ENCODE measurements at regions of chr19 and their contacts with region 1.

Region 1: DNA sequence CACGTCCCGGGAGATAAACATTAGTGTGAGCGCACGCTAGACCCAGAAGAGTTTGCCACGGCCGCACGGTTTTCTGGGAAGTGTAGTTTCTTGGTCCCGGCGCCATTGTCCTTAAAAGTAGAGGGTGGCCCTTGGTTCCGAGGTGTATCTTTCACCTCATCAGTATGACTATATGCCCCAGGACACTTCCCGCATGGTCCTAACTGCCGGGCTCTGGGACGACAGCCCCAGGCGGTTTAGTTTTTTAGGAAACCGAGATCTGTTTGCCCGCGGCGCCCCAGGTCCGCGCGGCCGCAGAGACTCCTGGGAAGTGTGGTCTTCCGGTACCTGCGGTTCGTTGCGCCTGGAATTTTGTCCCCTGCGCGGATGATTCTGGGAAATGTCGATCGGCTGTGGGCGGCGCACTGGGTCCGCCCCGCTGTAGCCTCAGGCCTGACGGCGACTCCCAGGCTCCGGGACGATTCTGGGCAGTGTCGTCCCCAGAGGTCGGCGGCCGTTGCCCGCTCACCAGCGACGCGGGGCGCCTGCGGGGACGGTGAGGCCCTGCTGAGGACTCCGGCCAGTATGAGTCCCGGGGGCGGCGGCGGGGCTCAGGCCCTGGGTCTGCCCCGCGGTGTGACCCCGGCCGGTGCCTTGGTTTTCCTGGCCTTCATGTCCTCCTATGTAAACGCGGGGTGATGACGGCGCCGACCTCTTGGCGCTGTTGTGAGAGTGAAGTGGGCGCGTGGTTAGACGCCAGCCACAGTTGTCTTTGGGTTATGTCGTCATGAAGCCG is at the start of gene ZNF181:
- DNase-seq: peak; percentile 90
- ATAC-seq: peak; percentile 89
- H3K4me3 Mint-ChIP-seq: peak within 1 kb of the TSS; percentile 96
- H3K27ac Mint-ChIP-seq: peak within 1 kb of the TSS; percentile 96
- H3K4me1 Mint-ChIP-seq: peaks cover 22% of the 10 kb centered on the region
- H3K27me3 Mint-ChIP-seq: no peaks in the 10 kb centered on the region
- total RNA-seq, gene ZNF181: 4.5 TPM

Region 2: GRCh38 chr19:34134190-34135053 is 599.6 kb before region 1 on chr19:
- CTCF ChIA-PET with region 1: no interaction called
- POLR2A ChIA-PET with region 1: no interaction called
- intact Hi-C with region 1: loop called in 1 of 2 experiments (anchors 1 kb)
- DNase-seq: peak; percentile 94
- ATAC-seq: peak; percentile 94
- H3K4me3 Mint-ChIP-seq: peak overlapping the region; percentile 92
- H3K27ac Mint-ChIP-seq: peak overlapping the region; percentile 95
- H3K4me1 Mint-ChIP-seq: peaks cover 9% of the 10 kb centered on the region
- H3K27me3 Mint-ChIP-seq: no peaks in the 10 kb centered on the region

Region 3: GRCh38 chr19:34359140-34359953 is 374.7 kb before region 1 on chr19:
- CTCF ChIA-PET with region 1: no interaction called
- POLR2A ChIA-PET with region 1: no interaction called
- intact Hi-C with region 1: loop called in 1 of 2 experiments (anchors 1 kb)
- DNase-seq: peak; percentile 100
- ATAC-seq: peak; percentile 93
- H3K4me3 Mint-ChIP-seq: peak overlapping the region; percentile 77
- H3K27ac Mint-ChIP-seq: peak overlapping the region; percentile 89
- H3K4me1 Mint-ChIP-seq: peaks cover 43% of the 10 kb centered on the region
- H3K27me3 Mint-ChIP-seq: no peaks in the 10 kb centered on the region

Region 4: DNA sequence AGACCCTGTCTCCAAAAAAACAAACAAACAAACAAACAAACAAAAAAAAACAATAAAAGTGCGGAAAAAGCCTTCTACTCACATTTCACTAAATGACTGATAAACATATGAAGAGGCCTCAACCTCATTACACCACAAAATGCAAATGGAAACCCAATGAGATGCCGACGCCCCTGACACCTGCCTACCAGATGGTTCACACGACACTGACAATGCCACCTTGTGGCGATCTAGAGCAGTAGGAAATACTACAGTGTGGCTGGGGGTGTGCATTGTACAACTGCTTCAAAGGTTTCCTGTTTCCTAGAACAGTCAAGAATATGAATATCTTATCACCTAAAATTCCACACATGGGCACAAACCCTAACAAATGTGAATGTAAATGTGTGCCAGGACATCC is 71.1 kb before region 1 on chr19:
- CTCF ChIA-PET with region 1: no interaction called
- POLR2A ChIA-PET with region 1: no interaction called
- intact Hi-C with region 1: no loop called
- DNase-seq: peak; percentile 71
- ATAC-seq: peak; percentile 99
- H3K4me3 Mint-ChIP-seq: no peak overlapping the region
- H3K27ac Mint-ChIP-seq: peak overlapping the region; percentile 21
- H3K4me1 Mint-ChIP-seq: peaks cover 22% of the 10 kb centered on the region
- H3K27me3 Mint-ChIP-seq: peaks cover 3% of the 10 kb centered on the region

Region 5: GRCh38 chr19:34677386-34678084 is 56.5 kb before region 1 on chr19 and contains the start of gene ZNF302:
- CTCF ChIA-PET with region 1: interaction called, 6 read pairs
- POLR2A ChIA-PET with region 1: interaction called, 11 read pairs
- intact Hi-C with region 1: loop called (anchors 1 kb)
- DNase-seq: peak; percentile 97
- ATAC-seq: peak; percentile 86
- H3K4me3 Mint-ChIP-seq: peak within 1 kb of the TSS; percentile 81
- H3K27ac Mint-ChIP-seq: peak within 1 kb of the TSS; percentile 99
- H3K4me1 Mint-ChIP-seq: peaks cover 23% of the 10 kb centered on the region
- H3K27me3 Mint-ChIP-seq: no peaks in the 10 kb centered on the region
- total RNA-seq, gene ZNF302: 17.1 to 17.6 TPM

Region 6: DNA sequence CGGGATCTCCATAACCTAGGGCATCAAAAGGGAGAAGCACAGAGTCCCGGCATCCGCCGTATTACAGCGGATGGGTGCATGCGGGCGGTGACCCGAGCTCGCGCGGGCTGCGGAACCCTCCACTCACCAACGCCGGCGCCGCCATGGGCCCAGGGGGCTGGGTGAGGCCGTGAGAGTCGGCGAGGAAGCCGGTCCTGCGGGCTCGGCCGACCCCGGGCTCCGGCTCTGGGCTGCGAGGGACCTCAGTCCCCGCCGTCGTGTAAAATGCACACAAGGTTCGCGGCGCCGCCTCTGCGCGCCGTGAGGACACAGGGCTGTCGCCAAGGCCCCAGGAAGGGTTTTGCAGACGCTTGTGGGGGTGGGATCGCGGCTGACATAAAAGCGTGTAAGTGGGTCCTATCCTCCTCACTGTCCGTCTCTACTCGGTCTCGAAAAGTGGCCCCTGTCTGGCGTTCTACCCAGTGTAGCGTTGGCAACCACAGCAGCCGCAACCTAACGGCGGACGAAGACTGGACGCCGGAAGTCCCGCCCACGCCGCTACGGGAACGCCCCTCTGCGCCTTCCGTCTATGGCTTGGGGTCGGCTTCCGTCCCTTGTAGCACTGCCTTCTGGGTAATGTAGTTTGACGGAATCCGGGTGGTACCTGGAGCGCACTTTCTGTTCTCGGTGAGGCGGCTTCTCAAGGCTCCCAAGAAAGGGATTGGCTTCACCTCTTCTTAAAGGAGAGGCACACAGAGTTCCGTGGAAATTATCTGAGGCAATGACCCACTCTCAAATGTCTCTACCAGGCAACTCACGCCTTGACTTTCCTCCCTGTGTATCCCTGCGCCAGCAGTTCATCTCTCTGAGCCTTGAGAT is 38.9 kb after region 1 on chr19 and contains the start of gene ZNF599:
- CTCF ChIA-PET with region 1: interaction called, 3 read pairs
- POLR2A ChIA-PET with region 1: no interaction called
- intact Hi-C with region 1: loop called (anchors 1 kb)
- DNase-seq: peak; percentile 94
- ATAC-seq: peak; percentile 97
- H3K4me3 Mint-ChIP-seq: peak within 1 kb of the TSS; percentile 83
- H3K27ac Mint-ChIP-seq: peak within 1 kb of the TSS; percentile 86
- H3K4me1 Mint-ChIP-seq: peaks cover 11% of the 10 kb centered on the region
- H3K27me3 Mint-ChIP-seq: peaks cover 9% of the 10 kb centered on the region
- total RNA-seq, gene ZNF599: 3.5 to 3.7 TPM

Region 7: GRCh38 chr19:34926685-34927375 is 192.8 kb after region 1 on chr19 and contains the start of gene ZNF30:
- CTCF ChIA-PET with region 1: no interaction called
- POLR2A ChIA-PET with region 1: no interaction called
- intact Hi-C with region 1: loop called in 1 of 2 experiments (anchors 2 kb)
- DNase-seq: peak; percentile 92
- ATAC-seq: peak; percentile 100
- H3K4me3 Mint-ChIP-seq: peak within 1 kb of the TSS; percentile 93
- H3K27ac Mint-ChIP-seq: peak within 1 kb of the TSS; percentile 77
- H3K4me1 Mint-ChIP-seq: peaks cover 12% of the 10 kb centered on the region
- H3K27me3 Mint-ChIP-seq: no peaks in the 10 kb centered on the region
- total RNA-seq, gene ZNF30: 5.7 to 6.2 TPM

Region 8: DNA sequence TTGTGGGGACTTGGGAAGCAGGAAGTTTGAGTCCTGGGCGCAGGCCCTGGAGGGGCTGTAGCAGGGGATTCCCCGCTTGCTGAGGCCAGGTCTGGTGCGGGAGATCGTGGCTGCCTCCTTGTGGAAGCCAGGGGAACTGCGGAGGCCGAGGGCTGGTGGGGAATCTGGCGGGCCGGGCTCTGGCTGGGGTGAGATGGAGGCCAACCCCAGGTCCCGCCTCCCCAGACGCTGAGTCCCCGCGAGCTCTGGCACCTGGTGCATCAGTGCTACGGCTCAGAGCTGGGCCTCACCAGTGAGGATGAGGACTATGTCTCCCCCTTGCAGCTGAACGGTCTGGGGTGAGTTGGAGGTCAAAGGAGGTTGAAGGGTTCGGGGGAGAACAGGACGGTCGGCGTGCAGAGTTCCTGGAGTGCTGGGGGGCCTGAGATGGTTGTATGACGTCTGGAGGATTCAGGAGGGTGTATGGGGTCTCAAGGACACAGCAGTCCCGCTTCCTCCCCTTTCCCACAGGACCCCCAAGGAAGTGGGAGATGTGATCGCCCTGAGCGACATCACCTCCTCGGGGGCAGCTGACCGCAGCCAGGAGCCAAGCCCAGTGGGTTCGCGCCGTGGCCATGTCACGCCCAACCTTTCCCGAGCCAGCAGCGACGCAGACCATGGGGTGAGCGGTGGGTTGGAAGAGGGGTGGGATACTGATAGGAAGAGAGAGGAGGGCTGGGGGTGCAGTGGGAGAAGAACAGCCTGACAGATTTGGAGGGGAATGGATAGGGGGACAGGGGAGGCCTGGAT is 279.2 kb after region 1 on chr19:
- CTCF ChIA-PET with region 1: no interaction called
- POLR2A ChIA-PET with region 1: no interaction called
- intact Hi-C with region 1: loop called in 1 of 2 experiments (anchors 5 kb)
- DNase-seq: peak; percentile 89
- ATAC-seq: peak; percentile 86
- H3K4me3 Mint-ChIP-seq: peak overlapping the region; percentile 39
- H3K27ac Mint-ChIP-seq: peak overlapping the region; percentile 77
- H3K4me1 Mint-ChIP-seq: peaks cover 65% of the 10 kb centered on the region
- H3K27me3 Mint-ChIP-seq: no peaks in the 10 kb centered on the region

Measured in activated CD4-positive, alpha-beta T cell treated with anti-CD3 and anti-CD28 coated beads for 36 hours (primary cell).